Activated T-helper 1 cell treated with anti-CD3 and anti-CD28 coated beads, Interleukin-12 subunit alpha, Interleukin-12 subunit beta, Interleukin-2, Interleukin-4 antibody, amounts not matched to agents 30 ng/mL and 10 ng/mL and 1 ng/mL, durations not matched to agents 14 hours and 24 hours and 36 hours (primary cell): ENCODE measurements at regions of chr11 and their contacts with region 1.

Region 1: GRCh38 chr11:63768237-63769043 is at the start of gene ZFTA:
- DNase-seq: peak; percentile 45
- H3K4me3 Mint-ChIP-seq: peak within 1 kb of the TSS; percentile 87
- H3K27ac Mint-ChIP-seq: peak within 1 kb of the TSS; percentile 35
- H3K4me1 Mint-ChIP-seq: peaks cover 14% of the 10 kb centered on the region
- H3K27me3 Mint-ChIP-seq: peaks cover 33% of the 10 kb centered on the region
- total RNA-seq, gene ZFTA: 3.8 and 5.3 TPM in 2 replicates

Region 2: GRCh38 chr11:63813035-63813562 is 44.7 kb after region 1 on chr11 and contains the start of gene SPINDOC:
- intact Hi-C with region 1: loop called (anchors 1 kb)
- DNase-seq: peak; percentile 78
- H3K4me3 Mint-ChIP-seq: peak within 1 kb of the TSS; percentile 88
- H3K27ac Mint-ChIP-seq: peak within 1 kb of the TSS; percentile 55
- H3K4me1 Mint-ChIP-seq: peaks cover 34% of the 10 kb centered on the region
- H3K27me3 Mint-ChIP-seq: no peaks in the 10 kb centered on the region
- total RNA-seq, gene SPINDOC: 60.0 and 64.3 TPM in 2 replicates

Region 3: GRCh38 chr11:63945477-63946163 is 177.2 kb after region 1 on chr11:
- intact Hi-C with region 1: loop called (anchors 2 kb)
- DNase-seq: peak; percentile 35
- H3K4me3 Mint-ChIP-seq: no peak overlapping the region
- H3K27ac Mint-ChIP-seq: no peak overlapping the region
- H3K4me1 Mint-ChIP-seq: peaks cover 10% of the 10 kb centered on the region
- H3K27me3 Mint-ChIP-seq: no peaks in the 10 kb centered on the region

Region 4: DNA sequence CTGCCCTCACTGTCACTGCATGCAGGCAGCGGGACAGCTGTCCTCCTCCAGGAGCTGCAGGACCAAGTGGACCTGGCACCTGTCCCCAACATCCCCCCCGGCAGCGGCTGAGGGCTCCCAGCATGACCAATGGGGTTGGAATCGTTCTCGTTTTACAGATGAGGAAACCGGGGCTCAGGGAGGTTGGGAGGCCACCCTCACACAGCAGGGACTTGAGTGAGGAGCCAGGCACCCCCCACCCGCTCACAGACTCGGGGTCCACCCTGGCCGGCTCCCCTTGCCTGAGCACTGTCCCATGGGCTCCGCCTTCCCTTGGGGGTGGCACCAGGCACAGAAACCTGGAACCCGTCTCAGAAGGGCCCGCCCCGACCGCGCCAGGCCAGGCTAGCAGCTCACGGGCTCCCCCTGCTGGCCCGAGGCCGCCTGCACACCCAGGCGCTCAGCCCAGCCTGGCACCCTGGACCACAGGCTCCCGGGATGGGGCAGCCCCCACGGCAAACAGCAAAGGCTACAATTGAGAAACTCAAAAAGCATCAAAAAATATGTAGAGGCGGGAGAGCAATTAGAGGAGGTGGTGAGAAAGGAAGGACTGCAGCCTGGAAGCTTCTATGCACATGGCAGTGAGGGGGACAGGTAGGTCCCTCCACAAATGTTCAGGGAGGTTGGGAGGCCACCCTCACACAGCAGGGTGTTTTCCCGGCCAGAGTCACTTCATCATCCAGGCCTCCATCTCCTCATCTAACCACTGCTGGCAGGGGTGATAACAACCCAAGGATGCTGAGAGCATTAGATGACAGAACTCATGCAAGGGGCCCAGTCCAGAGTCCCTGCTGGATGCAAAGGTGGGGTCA is 384.6 kb after region 1 on chr11:
- intact Hi-C with region 1: loop called (anchors 1 kb)
- DNase-seq: peak; percentile 72
- H3K4me3 Mint-ChIP-seq: no peak overlapping the region
- H3K27ac Mint-ChIP-seq: no peak overlapping the region
- H3K4me1 Mint-ChIP-seq: no peaks in the 10 kb centered on the region
- H3K27me3 Mint-ChIP-seq: no peaks in the 10 kb centered on the region

Region 5: DNA sequence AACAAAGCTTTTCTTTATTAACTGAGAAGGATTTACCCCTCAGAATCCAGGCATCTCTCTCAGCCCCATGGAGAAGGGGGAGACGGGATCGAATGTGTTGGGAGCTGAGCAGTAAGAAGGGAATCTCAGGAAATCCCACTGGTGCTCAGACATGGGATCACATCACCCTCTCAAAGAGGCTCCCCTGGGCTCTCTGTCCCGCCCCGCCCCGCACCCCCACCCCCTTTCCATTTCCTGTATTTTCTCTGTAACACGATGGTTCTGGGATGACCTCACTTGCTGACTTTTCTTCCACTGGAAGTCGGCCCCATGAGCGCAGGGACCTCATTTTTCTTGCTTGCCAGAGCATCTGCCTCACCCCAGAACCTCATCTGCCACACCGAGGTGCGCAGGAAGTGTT is 690.6 kb after region 1 on chr11:
- intact Hi-C with region 1: no loop called
- DNase-seq: no peak
- H3K4me3 Mint-ChIP-seq: no peak overlapping the region
- H3K27ac Mint-ChIP-seq: no peak overlapping the region
- H3K4me1 Mint-ChIP-seq: no peaks in the 10 kb centered on the region
- H3K27me3 Mint-ChIP-seq: peaks cover 4% of the 10 kb centered on the region